GM12878 (cell line): ENCODE measurements at regions of chr1 and their contacts with region 1.

Region 1: GRCh38 chr1:152189657-152190442 is 30.8 kb upstream of the RPTN start:
- DNase-seq: no peak
- ATAC-seq: peak; percentile 85
- H3K4me3 ChIP-seq: peak overlapping the region; percentile 59; the same call in 1 of the 2 replicates
- H3K27ac ChIP-seq: no peak overlapping the region
- H3K4me1 ChIP-seq: no peaks in the 10 kb centered on the region; the same call in 1 of the 2 replicates
- H3K27me3 ChIP-seq: no peaks in the 10 kb centered on the region
- CTCF ChIP-seq: peak; percentile 70 to 74 (median 74)
- EP300 ChIP-seq: no peak
- POLR2A ChIP-seq: no peak
- RAD21 ChIP-seq: peak; percentile 77

Region 2: DNA sequence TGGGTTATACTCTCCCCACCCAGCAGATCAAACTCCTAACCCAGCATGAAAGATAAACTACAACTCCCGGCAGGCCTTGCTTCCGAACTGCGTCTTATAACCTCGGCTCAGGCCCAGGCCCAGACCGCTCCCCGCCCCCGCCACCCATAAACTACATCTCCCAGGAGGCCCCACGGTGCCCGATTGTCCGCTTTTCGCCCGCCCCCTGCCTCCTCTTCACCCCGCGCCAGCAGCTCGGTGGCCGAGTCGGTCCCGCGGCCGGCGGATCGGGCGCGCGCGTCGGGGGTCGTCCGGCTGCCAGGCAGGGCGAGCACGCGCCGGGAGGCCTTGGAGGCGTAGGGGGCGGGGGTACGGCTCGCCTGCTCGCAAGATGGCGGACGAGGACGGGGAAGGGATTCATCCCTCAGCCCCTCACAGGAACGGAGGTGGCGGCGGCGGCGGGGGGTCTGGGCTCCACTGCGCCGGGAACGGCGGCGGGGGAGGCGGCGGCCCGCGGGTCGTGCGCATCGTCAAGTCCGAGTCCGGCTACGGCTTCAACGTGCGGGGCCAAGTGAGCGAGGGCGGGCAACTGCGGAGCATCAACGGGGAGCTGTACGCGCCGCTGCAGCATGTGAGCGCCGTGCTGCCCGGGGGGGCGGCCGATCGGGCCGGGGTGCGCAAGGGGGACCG is 577.9 kb before region 1 on chr1 and contains the start of gene SNX27:
- CTCF ChIA-PET with region 1: no interaction called
- POLR2A ChIA-PET with region 1: no interaction called
- RAD21 ChIA-PET with region 1: no interaction called
- SMC1A ChIA-PET with region 1: no interaction called
- in situ Hi-C with region 1: no loop called
- intact Hi-C with region 1: no loop called
- DNase-seq: peak; percentile 72
- ATAC-seq: peak; percentile 95
- H3K4me3 ChIP-seq: peak within 1 kb of the TSS; percentile 85
- H3K27ac ChIP-seq: peak within 1 kb of the TSS; percentile 72
- H3K4me1 ChIP-seq: no peaks in the 10 kb centered on the region
- H3K27me3 ChIP-seq: no peaks in the 10 kb centered on the region
- CTCF ChIP-seq: no peak
- EP300 ChIP-seq: no peak
- POLR2A ChIP-seq: peak; percentile 86
- RAD21 ChIP-seq: no peak
- polyA plus RNA-seq, gene SNX27: 3.8 to 3.9 TPM

Region 3: DNA sequence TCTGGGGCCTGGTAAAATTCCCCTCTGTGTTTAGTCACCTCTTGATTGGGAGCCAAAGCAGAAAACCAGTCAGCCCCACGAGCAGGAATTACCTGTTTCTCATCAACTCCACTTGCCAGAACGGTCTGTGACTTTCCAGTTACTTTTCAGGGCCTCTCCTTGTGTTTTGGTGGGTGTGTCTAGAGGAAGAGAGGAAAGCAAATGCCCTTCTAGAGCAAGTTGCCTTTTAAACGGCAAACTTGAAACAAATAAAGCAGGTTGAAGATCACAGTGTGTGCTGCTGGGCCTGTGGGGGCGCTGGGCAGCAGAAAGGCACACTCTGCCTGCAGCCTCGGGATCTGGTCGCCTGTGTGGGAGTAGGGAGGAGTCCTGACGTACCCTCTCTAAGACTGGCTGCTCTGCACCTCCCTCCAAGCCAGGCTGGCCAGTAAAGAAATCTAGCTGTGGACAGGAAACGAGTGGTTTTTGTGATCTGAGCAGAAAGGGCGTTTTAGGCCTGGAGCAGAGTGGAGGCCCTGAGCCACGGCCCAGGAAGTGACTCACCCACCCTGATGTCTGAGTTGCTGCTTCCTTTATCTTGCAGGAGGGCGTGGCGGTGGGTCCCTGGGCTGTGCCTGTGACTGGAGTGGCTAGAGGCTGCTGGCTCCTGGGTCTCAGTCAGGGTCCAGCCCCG is 142.0 kb before region 1 on chr1:
- CTCF ChIA-PET with region 1: interaction called, 106 read pairs
- POLR2A ChIA-PET with region 1: no interaction called
- RAD21 ChIA-PET with region 1: interaction called, 13 read pairs
- SMC1A ChIA-PET with region 1: interaction called, 4 read pairs
- in situ Hi-C with region 1: loop called (anchors 5 kb)
- intact Hi-C with region 1: loop called (anchors 1 kb)
- DNase-seq: peak; percentile 96
- ATAC-seq: peak; percentile 97
- H3K4me3 ChIP-seq: peak overlapping the region; percentile 20; the same call in 1 of the 2 replicates
- H3K27ac ChIP-seq: peak overlapping the region; percentile 80
- H3K4me1 ChIP-seq: peaks cover 15% of the 10 kb centered on the region
- H3K27me3 ChIP-seq: 0 out of 4 replicates have a peak, but pooled peaks cover 0 to 3% of the 10 kb centered on the region in 2 experiments
- CTCF ChIP-seq: peak; percentile 51 to 65 (median 65)
- EP300 ChIP-seq: no peak
- POLR2A ChIP-seq: peak; percentile 77
- RAD21 ChIP-seq: no peak

Region 4: GRCh38 chr1:152141974-152142584 is 47.8 kb before region 1 on chr1:
- CTCF ChIA-PET with region 1: interaction called, 4 read pairs
- POLR2A ChIA-PET with region 1: no interaction called
- RAD21 ChIA-PET with region 1: no interaction called
- SMC1A ChIA-PET with region 1: interaction called, 3 read pairs
- in situ Hi-C with region 1: no loop called
- intact Hi-C with region 1: loop called (anchors 1 kb)
- DNase-seq: no peak
- ATAC-seq: no peak
- H3K4me3 ChIP-seq: no peak overlapping the region
- H3K27ac ChIP-seq: no peak overlapping the region
- H3K4me1 ChIP-seq: peaks cover 4% of the 10 kb centered on the region; the same call in 1 of the 2 replicates
- H3K27me3 ChIP-seq: no peaks in the 10 kb centered on the region; a peak in 1 of 4 replicates
- CTCF ChIP-seq: peak; percentile 49 to 78 (median 55); a peak in 5 of 6 replicates
- EP300 ChIP-seq: no peak
- POLR2A ChIP-seq: no peak
- RAD21 ChIP-seq: peak; percentile 80

Region 5: GRCh38 chr1:152175544-152175943 is 14.3 kb before region 1 on chr1:
- CTCF ChIA-PET with region 1: interaction called, 29 read pairs
- POLR2A ChIA-PET with region 1: no interaction called
- RAD21 ChIA-PET with region 1: interaction called, 3 read pairs
- SMC1A ChIA-PET with region 1: interaction called, 4 read pairs
- in situ Hi-C with region 1: no loop called
- intact Hi-C with region 1: no loop called
- DNase-seq: no peak
- ATAC-seq: no peak
- H3K4me3 ChIP-seq: no peak overlapping the region
- H3K27ac ChIP-seq: no peak overlapping the region
- H3K4me1 ChIP-seq: no peaks in the 10 kb centered on the region
- H3K27me3 ChIP-seq: no peaks in the 10 kb centered on the region
- CTCF ChIP-seq: no peak
- EP300 ChIP-seq: no peak
- POLR2A ChIP-seq: no peak
- RAD21 ChIP-seq: no peak

Region 6: DNA sequence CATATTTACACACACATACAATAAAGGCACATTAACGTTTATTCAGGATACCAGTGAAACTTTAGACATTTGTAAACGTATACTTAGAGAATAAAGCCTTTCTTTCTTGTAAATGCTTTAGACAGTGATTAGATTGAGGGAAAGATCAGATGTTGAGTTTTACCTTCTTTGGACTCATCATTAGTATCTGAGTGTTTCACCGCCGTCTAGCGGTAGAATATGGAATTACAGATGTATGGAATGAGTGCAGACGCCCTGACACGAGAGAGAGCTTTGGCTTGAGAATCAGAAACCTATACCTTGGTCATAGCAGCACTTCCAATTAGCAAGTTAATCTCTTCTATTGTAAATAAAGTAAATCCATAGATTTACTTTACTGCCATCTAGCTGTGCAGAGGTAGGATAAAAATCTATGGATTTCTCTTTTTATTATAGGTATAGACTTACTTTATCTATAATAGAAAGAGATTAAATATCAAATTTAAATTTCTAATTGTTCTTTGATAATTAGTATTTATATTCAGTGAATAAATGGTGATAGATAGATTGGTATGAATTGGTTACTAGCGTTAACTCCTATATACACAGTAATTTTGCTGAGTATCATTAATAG is 157.4 kb after region 1 on chr1:
- CTCF ChIA-PET with region 1: interaction called, 4 read pairs
- POLR2A ChIA-PET with region 1: no interaction called
- RAD21 ChIA-PET with region 1: interaction called, 3 read pairs
- SMC1A ChIA-PET with region 1: no interaction called
- in situ Hi-C with region 1: loop called (anchors 5 kb)
- intact Hi-C with region 1: loop called (anchors 5 kb)
- DNase-seq: peak; percentile 9
- ATAC-seq: peak; percentile 84
- H3K4me3 ChIP-seq: no peak overlapping the region
- H3K27ac ChIP-seq: no peak overlapping the region
- H3K4me1 ChIP-seq: no peaks in the 10 kb centered on the region
- H3K27me3 ChIP-seq: no peaks in the 10 kb centered on the region
- CTCF ChIP-seq: peak; percentile 79 to 93 (median 85)
- EP300 ChIP-seq: no peak
- POLR2A ChIP-seq: no peak
- RAD21 ChIP-seq: peak; percentile 49

Region 7: DNA sequence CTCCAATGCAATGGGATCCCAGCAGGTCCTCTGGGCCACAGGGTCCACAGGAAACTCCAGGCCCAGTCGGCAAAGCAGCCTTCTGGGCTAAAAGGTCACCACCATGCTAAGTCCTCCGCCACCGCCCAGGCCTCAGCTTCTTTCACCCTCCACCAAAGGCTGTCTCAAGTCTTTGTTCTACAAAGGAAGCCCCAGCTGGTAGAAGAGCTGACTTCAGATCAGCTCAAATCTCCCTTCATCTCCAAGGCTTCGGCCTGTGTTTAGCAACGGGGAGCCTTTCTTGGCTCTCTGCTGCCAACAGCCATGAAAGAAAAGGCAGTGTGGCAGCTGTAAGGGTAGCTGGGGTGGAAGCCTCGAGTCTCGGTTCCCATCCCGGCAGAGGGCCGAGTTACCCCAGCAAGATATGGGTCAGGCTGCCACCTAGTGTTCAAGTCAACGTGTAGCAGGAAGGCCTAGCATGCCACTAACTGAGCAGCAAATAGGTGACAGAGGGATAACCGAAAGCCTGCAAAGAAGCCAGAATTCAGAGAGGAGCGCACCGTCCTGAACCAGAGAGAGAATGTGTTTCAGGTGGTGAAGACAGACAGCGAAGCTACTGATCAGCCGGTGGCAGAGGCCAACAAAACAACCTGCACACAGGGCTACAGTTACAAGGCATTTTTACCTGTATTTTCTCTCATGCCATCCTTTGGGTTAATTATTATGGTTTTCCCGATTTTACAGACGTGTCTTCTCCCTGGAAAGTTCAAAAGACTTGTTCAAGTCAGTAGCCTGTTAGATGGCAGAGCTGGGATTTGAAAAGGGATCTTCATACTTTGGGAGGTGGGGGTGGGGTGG is 251.0 kb after region 1 on chr1:
- CTCF ChIA-PET with region 1: interaction called, 12 read pairs
- POLR2A ChIA-PET with region 1: no interaction called
- RAD21 ChIA-PET with region 1: interaction called, 5 read pairs
- SMC1A ChIA-PET with region 1: no interaction called
- in situ Hi-C with region 1: no loop called
- intact Hi-C with region 1: loop called (anchors 1 kb)
- DNase-seq: peak; percentile 38
- ATAC-seq: peak; percentile 100
- H3K4me3 ChIP-seq: no peak overlapping the region
- H3K27ac ChIP-seq: no peak overlapping the region
- H3K4me1 ChIP-seq: no peaks in the 10 kb centered on the region
- H3K27me3 ChIP-seq: 0 out of 4 replicates have a peak, but pooled peaks cover 0 to 2% of the 10 kb centered on the region in 2 experiments
- CTCF ChIP-seq: peak; percentile 85 to 91 (median 85)
- EP300 ChIP-seq: no peak
- POLR2A ChIP-seq: no peak
- RAD21 ChIP-seq: peak; percentile 79

Region 8: GRCh38 chr1:152768847-152769533 is 579.1 kb after region 1 on chr1:
- CTCF ChIA-PET with region 1: no interaction called
- POLR2A ChIA-PET with region 1: no interaction called
- RAD21 ChIA-PET with region 1: no interaction called
- SMC1A ChIA-PET with region 1: no interaction called
- in situ Hi-C with region 1: no loop called
- intact Hi-C with region 1: no loop called
- DNase-seq: no peak
- ATAC-seq: no peak
- H3K4me3 ChIP-seq: no peak overlapping the region
- H3K27ac ChIP-seq: no peak overlapping the region
- H3K4me1 ChIP-seq: no peaks in the 10 kb centered on the region
- H3K27me3 ChIP-seq: no peaks in the 10 kb centered on the region; a peak in 1 of 4 replicates
- CTCF ChIP-seq: no peak
- EP300 ChIP-seq: no peak
- POLR2A ChIP-seq: no peak
- RAD21 ChIP-seq: no peak